ENCODE measurements at regions of chr3 and their contacts with region 1.

Region 1: DNA sequence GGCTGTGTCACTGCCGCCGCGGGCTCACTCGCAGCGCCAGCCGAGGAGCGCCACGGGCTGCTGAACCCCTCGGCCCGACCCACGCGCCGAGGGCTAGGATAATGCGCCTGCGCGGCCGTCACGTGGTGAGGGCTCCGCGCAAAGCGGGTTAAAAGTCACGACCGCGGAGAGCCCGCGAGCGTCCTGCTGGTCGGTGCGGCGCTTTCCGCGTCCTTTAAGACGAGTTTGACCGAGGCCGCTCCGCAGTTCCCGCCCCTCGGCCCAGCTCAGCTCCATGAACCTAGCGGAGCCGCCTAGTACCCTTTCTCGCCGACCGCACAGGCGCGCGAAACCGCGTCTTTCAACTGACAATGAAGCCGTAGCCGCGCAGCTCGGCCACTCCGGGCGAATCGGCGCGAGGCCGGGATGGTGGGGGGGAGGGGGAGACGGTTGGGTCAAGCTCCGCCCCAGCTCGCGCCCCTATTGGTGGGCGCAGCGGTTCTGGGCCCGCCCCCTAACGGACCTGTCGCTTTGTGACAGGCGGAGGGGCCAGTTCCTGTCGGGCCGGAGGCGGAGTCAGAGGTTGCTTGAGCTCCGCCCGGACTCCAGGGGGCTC is 636 bp upstream of the STT3B start:
- DNase-seq: peak; percentile 99
- ATAC-seq: peak; percentile 88
- H3K4me3 Mint-ChIP-seq: no peak overlapping the region
- H3K27ac Mint-ChIP-seq: peak overlapping the region; percentile 99
- H3K4me1 Mint-ChIP-seq: peaks cover 12% of the 10 kb centered on the region
- H3K27me3 Mint-ChIP-seq: no peaks in the 10 kb centered on the region

Region 2: DNA sequence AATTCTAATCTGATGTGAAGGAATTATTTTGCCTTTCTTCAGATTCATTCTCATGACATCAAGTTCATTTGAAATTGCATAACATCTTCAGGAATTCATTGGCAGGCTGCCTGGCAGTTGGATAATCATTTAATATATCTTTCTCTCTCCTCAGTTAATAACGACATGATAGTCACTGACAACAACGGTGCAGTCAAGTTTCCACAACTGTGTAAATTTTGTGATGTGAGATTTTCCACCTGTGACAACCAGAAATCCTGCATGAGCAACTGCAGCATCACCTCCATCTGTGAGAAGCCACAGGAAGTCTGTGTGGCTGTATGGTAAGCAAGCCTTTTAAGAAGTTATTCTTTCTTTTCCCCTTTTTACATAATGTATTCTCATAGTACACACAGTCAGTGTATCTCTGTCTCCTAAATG is 887.5 kb before region 1 on chr3:
- CTCF ChIA-PET with region 1: no interaction called
- POLR2A ChIA-PET with region 1: no interaction called
- intact Hi-C with region 1: loop called in 1 of 2 experiments (anchors 5 kb)
- DNase-seq: peak; percentile 74
- ATAC-seq: peak; percentile 62
- H3K4me3 Mint-ChIP-seq: peak overlapping the region; percentile 58
- H3K27ac Mint-ChIP-seq: peak overlapping the region; percentile 94
- H3K4me1 Mint-ChIP-seq: peaks cover 94% of the 10 kb centered on the region
- H3K27me3 Mint-ChIP-seq: no peaks in the 10 kb centered on the region

Region 3: GRCh38 chr3:31219131-31219843 is 312.8 kb before region 1 on chr3:
- CTCF ChIA-PET with region 1: interaction called, 8 read pairs
- POLR2A ChIA-PET with region 1: no interaction called
- intact Hi-C with region 1: loop called (anchors 2 to 5 kb)
- DNase-seq: no peak
- ATAC-seq: no peak
- H3K4me3 Mint-ChIP-seq: no peak overlapping the region
- H3K27ac Mint-ChIP-seq: no peak overlapping the region
- H3K4me1 Mint-ChIP-seq: peaks cover 86% of the 10 kb centered on the region
- H3K27me3 Mint-ChIP-seq: no peaks in the 10 kb centered on the region

Region 4: DNA sequence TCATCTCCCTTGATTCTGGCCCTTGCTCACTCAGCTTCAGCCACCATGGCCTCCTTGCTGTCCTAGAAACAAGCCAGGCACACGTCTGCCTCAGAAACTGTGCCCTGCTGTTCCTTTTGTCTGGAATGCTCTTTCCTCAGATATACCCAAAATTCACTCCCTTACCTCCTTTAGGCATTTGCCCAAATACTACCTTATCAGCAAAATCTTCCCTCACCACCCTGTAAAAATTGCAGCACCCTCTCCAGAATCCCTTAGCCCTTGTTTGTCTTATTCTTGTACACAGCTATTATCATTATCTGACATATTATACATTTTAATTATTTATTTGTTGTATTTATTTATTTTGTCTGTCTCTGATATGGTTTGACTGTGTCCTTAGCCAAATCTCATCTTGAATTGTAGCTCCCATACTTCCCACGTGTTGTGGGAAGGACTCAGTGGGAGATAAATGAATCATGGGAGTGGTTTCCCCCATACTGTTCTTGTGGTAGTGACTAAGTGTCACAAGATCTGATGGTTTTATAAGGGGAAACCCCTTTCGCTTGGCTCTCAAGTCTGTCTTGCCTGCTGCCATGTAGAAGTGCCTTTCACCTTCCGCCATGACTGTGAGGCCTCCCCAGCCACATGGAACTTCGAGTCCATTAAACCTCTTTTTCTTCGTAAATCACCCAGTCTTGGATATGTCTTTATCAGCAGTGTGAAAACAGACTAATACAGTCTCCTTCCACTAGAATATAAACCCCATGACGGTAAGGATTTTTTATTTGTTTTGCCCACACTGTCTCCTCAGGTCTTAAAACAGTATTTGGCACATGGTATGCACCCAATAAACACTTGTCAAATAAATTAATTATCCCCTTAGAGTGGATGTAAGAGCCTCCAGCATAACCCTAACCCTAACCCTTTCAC is 59.4 kb before region 1 on chr3:
- CTCF ChIA-PET with region 1: no interaction called
- POLR2A ChIA-PET with region 1: no interaction called
- intact Hi-C with region 1: loop called in 1 of 2 experiments (anchors 5 kb)
- DNase-seq: peak; percentile 65
- ATAC-seq: peak; percentile 95
- H3K4me3 Mint-ChIP-seq: no peak overlapping the region
- H3K27ac Mint-ChIP-seq: peak overlapping the region; percentile 41
- H3K4me1 Mint-ChIP-seq: peaks cover 19% of the 10 kb centered on the region
- H3K27me3 Mint-ChIP-seq: no peaks in the 10 kb centered on the region

Region 5: GRCh38 chr3:31768479-31769123 is 236.5 kb after region 1 on chr3:
- CTCF ChIA-PET with region 1: no interaction called
- POLR2A ChIA-PET with region 1: interaction called, 4 read pairs
- intact Hi-C with region 1: loop called (anchors 2 to 5 kb)
- DNase-seq: peak; percentile 77
- ATAC-seq: peak; percentile 44
- H3K4me3 Mint-ChIP-seq: no peak overlapping the region
- H3K27ac Mint-ChIP-seq: no peak overlapping the region
- H3K4me1 Mint-ChIP-seq: peaks cover 50% of the 10 kb centered on the region
- H3K27me3 Mint-ChIP-seq: peaks cover 2% of the 10 kb centered on the region

Region 6: GRCh38 chr3:31790193-31791089 is 258.4 kb after region 1 on chr3:
- CTCF ChIA-PET with region 1: no interaction called
- POLR2A ChIA-PET with region 1: no interaction called
- intact Hi-C with region 1: no loop called
- DNase-seq: no peak
- ATAC-seq: no peak
- H3K4me3 Mint-ChIP-seq: no peak overlapping the region
- H3K27ac Mint-ChIP-seq: no peak overlapping the region
- H3K4me1 Mint-ChIP-seq: no peaks in the 10 kb centered on the region
- H3K27me3 Mint-ChIP-seq: peaks cover 2% of the 10 kb centered on the region

Measured in activated CD4-positive, alpha-beta T cell treated with anti-CD3 and anti-CD28 coated beads for 36 hours (primary cell).